H1 (cell line): ENCODE measurements at regions of chr15 and their contacts with region 1.

Region 1: GRCh38 chr15:71575474-71576045 is 234.8 kb upstream of the NR2E3 start:
- DNase-seq: no peak
- H3K4me3 ChIP-seq: no peak overlapping the region
- H3K27ac ChIP-seq: no peak overlapping the region
- H3K4me1 ChIP-seq: peaks cover 0 to 3% (median 0%) of the 10 kb centered on the region in 4 experiments; a peak in 2 of 7 replicates
- H3K27me3 ChIP-seq: no peaks in the 10 kb centered on the region
- CTCF ChIP-seq: peak in 2 of 3 experiments; percentile 36 to 47; a peak in 2 of 4 replicates
- EP300 ChIP-seq: no peak
- POLR2A ChIP-seq: no peak
- RAD21 ChIP-seq: peak; percentile 59 to 62

Region 2: DNA sequence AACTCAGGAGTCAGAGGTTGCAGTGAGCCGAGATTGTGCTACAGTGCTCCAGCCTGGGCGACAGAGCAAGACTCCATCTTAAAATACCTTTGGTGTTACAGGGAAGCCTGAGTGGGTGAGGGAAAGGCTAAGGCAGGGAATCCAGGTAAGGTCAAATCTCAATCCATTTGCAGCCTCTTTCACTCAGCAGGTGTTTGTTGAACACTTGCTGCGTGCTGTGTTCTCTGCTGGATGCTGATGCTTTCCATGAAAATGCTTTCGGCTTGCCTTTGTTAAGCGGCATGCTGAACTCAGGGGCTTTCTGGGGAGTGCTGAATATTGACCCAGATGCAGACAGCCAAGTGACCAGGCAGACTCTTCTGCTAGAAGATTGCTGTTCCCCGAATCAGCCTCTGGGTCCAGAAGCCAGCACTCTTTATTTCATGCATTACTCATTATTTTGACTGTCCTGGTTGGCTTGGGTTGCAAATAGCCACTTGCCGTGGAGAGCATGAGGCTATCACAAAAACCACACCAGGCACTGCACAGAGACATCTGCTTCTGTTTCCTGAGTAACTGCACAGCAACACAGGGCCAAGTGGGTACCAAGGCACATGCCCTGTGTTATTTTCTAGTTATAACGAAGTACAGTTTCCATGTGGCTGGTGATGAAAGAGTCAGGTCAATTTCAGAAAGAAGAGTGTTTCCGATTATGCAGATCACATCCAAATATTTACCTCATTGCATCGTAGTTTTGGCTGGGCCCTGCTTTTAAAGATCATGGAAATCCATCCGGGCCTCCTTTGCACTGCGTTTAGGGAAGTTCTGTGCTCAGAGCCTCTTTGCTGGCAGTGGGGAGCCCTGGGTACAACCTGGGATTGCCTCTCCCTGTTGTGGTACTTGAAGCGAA is 371.7 kb before region 1 on chr15:
- CTCF ChIA-PET with region 1: no interaction called
- POLR2A ChIA-PET with region 1: no interaction called
- DNase-seq: peak; percentile 77 to 84
- H3K4me3 ChIP-seq: peak overlapping the region in 1 of 4 experiments; percentile 23; a peak in 1 of 8 replicates
- H3K27ac ChIP-seq: no peak overlapping the region; the same call in 1 of the 2 replicates
- H3K4me1 ChIP-seq: peaks cover 19 to 34% (median 28%) of the 10 kb centered on the region in 4 experiments
- H3K27me3 ChIP-seq: peaks cover 0 to 4% (median 0%) of the 10 kb centered on the region in 4 experiments; a peak in 1 of 7 replicates
- CTCF ChIP-seq: no peak
- EP300 ChIP-seq: peak in 1 of 2 experiments; percentile 98; a peak in 2 of 3 replicates
- POLR2A ChIP-seq: no peak
- RAD21 ChIP-seq: peak in 1 of 2 experiments; percentile 37; a peak in 2 of 4 replicates

Region 3: DNA sequence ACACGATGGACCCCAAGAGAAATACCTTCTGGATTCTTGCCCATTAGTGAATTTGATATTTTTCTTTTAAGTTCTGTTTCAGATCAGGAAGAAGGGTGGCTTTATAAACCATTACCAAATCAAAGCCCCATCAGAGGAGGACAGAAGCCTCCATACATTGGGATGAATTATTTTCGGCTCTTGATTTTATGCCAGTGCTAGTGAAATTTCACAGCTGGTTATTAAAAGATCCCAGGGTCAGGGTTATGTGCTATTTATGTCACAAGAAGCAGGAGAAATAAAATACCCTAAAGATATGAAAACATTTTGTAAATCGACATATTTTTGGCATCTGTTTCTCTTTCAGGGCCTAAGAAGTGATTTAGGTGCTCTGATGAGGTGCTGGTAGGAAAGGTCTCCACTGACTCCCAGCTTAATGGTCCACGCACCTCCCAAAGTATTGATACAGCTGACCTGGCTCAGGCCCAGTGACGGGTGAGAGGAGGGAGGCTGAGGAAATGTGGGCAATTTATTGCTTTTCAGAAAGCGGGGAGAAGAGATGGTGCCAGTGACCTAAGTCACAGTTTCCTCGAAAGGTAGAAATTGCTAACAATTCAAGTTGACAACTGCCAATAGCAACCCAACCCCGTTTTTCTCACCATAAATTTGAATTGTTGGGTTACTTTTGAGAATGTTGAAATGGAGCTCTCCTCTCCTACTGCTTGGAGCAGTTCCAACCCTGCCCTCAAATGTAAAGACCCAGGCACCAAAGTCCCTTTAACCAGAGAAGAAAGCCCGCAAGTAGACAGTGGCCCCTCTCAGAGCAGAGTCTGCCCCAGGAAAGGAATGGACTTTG is 80.8 kb before region 1 on chr15:
- CTCF ChIA-PET with region 1: interaction called, 12 read pairs
- POLR2A ChIA-PET with region 1: no interaction called
- DNase-seq: no peak
- H3K4me3 ChIP-seq: no peak overlapping the region
- H3K27ac ChIP-seq: no peak overlapping the region
- H3K4me1 ChIP-seq: no peaks in the 10 kb centered on the region
- H3K27me3 ChIP-seq: no peaks in the 10 kb centered on the region
- CTCF ChIP-seq: no peak
- EP300 ChIP-seq: no peak
- POLR2A ChIP-seq: no peak
- RAD21 ChIP-seq: no peak

Region 4: DNA sequence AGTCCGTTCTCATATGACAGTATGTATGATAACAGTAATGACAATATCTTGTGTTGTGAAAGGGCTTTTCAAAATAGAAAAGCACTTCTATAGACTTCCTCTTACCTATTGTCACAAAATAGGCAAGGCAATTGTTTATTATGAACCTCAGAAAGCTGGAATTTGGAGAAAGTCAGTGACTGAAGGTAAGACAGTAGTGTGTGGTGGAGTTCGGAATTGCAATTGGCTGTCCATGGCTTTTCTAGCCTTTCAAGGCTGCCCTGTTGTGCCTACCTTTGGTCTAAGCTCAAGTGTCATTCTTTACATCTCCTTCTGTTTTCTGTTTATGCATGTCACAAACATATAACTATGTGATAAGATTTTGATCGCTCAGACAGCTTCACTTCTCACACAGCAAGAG is 15.5 kb after region 1 on chr15:
- CTCF ChIA-PET with region 1: interaction called, 29 read pairs
- POLR2A ChIA-PET with region 1: interaction called, 3 read pairs
- DNase-seq: no peak
- H3K4me3 ChIP-seq: no peak overlapping the region
- H3K27ac ChIP-seq: no peak overlapping the region
- H3K4me1 ChIP-seq: no peaks in the 10 kb centered on the region; a peak in 1 of 7 replicates
- H3K27me3 ChIP-seq: no peaks in the 10 kb centered on the region
- CTCF ChIP-seq: peak in 1 of 3 experiments; percentile 20; a peak in 1 of 4 replicates
- EP300 ChIP-seq: no peak
- POLR2A ChIP-seq: no peak
- RAD21 ChIP-seq: no peak

Region 5: DNA sequence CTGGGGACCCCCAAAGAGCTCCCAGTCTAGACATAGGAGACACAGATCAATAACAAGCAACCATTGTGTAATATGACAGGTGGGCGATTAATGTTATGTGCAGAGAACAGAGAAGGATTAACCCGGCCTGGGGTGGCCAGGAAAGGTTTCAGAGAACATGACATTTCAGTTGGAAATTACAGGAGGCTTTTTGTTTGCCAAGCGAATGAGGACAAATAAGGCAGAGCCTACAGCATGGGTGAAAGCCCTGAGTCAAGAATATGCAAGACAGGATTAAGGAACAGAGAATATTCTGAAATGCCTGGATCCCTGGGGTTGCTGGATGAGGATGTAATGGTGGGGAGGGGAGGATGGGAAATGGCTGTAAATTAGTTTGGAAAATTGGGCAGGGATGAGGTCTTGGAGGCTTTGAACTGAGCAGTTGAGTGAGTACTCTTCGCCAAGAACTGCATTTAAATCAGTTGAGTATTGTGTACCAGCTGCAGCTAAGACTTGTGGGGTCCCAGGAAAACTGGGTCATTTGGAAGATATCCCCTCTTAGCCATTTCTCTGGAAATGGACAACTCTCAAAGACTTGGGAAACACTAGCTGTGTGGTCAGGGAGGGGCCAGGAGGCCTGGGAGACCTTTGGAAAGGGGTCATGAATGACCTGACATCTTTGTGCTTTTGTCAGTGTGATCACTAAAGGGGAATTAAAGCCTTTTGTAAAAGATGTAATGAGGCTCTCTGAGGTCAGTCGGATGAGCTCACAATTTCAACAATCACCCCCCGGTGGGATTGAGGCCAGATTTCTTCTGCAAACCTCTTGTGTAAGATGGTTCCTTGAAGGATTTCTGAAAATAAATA is 36.2 kb after region 1 on chr15:
- CTCF ChIA-PET with region 1: interaction called, 10 read pairs
- POLR2A ChIA-PET with region 1: no interaction called
- DNase-seq: no peak
- H3K4me3 ChIP-seq: peak overlapping the region in 1 of 4 experiments; percentile 15; a peak in 1 of 8 replicates
- H3K27ac ChIP-seq: peak overlapping the region; percentile 26
- H3K4me1 ChIP-seq: peaks cover 4 to 20% (median 11%) of the 10 kb centered on the region in 4 experiments; a peak in 6 of 7 replicates
- H3K27me3 ChIP-seq: no peaks in the 10 kb centered on the region
- CTCF ChIP-seq: no peak
- EP300 ChIP-seq: no peak
- POLR2A ChIP-seq: no peak
- RAD21 ChIP-seq: no peak

Region 6: DNA sequence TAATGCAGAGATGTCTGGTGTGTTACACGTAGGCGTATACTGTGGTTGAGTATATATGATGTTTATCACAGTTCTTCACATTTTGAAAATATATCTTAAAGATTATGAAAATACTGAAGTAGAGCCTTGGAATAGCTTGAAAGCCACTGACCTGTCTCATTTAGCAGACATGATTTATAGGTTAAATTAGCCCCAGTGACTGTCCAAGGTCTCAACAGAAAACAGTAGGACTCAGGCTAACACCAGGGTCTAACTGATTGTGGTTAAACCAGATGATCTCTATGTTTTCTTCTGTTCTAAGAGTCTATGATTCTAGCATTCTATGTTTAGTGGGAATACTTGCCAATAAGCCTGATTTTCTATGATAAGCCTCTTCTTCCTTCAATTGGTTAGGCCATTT is 68.4 kb after region 1 on chr15:
- CTCF ChIA-PET with region 1: interaction called, 122 read pairs
- POLR2A ChIA-PET with region 1: no interaction called
- DNase-seq: no peak
- H3K4me3 ChIP-seq: no peak overlapping the region
- H3K27ac ChIP-seq: no peak overlapping the region
- H3K4me1 ChIP-seq: peaks cover 0 to 8% (median 4%) of the 10 kb centered on the region in 4 experiments; a peak in 4 of 7 replicates
- H3K27me3 ChIP-seq: no peaks in the 10 kb centered on the region
- CTCF ChIP-seq: no peak
- EP300 ChIP-seq: no peak
- POLR2A ChIP-seq: no peak
- RAD21 ChIP-seq: no peak

Region 7: GRCh38 chr15:71730277-71731144 is 155.0 kb after region 1 on chr15:
- CTCF ChIA-PET with region 1: interaction called, 18 read pairs
- POLR2A ChIA-PET with region 1: no interaction called
- DNase-seq: peak in 1 of 2 experiments; percentile 54
- H3K4me3 ChIP-seq: no peak overlapping the region
- H3K27ac ChIP-seq: no peak overlapping the region
- H3K4me1 ChIP-seq: no peaks in the 10 kb centered on the region
- H3K27me3 ChIP-seq: no peaks in the 10 kb centered on the region
- CTCF ChIP-seq: peak; percentile 48 to 83 (median 71)
- EP300 ChIP-seq: no peak
- POLR2A ChIP-seq: no peak
- RAD21 ChIP-seq: peak; percentile 70 to 74